Dorsolateral prefrontal cortex (tissue), 120 donors: ENCODE measurements at regions of chr3 and their contacts with region 1.

Region 1: DNA sequence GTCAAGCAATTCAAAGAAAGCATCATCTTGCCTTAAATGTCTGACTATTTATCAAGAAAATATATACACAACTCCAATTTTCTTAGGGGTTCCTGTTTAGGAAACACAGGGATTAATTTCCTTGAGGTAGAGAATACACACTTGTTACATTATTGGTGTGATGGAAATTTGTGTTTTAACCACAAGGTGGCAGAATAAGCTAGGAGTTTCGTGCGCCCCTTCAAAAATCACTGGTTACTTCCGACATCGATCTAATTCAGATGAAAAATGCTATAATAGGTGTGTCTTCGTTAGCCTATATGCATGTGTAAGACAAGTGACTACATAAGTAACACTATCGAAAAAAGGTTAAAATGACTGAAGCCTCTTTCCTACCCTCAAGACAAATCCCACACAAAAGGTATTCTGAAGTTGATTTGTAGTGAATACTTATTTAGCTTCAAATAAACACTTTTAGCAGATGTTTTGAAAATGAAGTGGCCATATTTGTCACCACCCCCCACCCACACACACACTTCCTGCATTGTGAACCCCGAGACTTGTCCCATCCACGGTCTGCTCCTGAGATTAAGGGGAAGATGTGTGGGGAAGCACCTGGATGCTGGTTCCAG is 246.5 kb downstream of the ROBO1 start:
- DNase-seq: no peak
- H3K4me3 ChIP-seq: no peak overlapping the region
- H3K27ac ChIP-seq: no peak overlapping the region
- H3K27me3 ChIP-seq: peaks cover 0 to 13% (median 0%) of the 10 kb centered on the region in 45 donors
- CTCF ChIP-seq: peak; percentile 52 to 88 (median 75)

Region 2: GRCh38 chr3:79543218-79543982 is 22.1 kb after region 1 on chr3:
- intact Hi-C with region 1: no loop called
- DNase-seq: no peak
- H3K4me3 ChIP-seq: no peak overlapping the region
- H3K27ac ChIP-seq: no peak overlapping the region
- H3K27me3 ChIP-seq: peaks cover 0 to 5% (median 0%) of the 10 kb centered on the region in 45 donors
- CTCF ChIP-seq: no peak

Region 3: GRCh38 chr3:80688814-80689213 is 1167.5 kb after region 1 on chr3:
- intact Hi-C with region 1: loop called in 1 of 2 experiments (anchors 10 kb)
- DNase-seq: peak in 1 of 10 donors; percentile 16
- H3K4me3 ChIP-seq: no peak overlapping the region
- H3K27ac ChIP-seq: no peak overlapping the region
- H3K27me3 ChIP-seq: no peaks in the 10 kb centered on the region
- CTCF ChIP-seq: peak in 53 of 56 donors; percentile 13 to 74 (median 46)